ENCODE measurements at regions of chr9 and their contacts with region 1.

Region 1: DNA sequence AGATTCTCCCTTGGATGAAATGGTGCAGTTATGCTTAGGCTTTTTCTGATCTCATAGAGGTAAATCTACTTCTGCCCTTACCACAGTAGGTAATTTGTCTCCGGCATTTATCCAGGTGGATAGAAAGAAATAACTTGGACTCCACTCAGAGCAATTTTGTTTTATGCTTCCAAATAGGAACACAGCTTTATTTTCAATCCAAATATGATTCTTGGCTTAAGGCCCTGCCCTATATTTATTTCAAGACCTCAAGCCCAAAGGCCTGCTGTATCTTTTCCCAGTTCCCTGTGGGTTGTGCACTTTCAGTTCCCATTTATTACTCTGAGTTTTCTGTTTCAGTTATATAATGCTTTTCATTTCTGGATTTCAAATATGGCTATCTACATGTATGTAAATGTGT is 274.2 kb upstream of the SMC2 start:
- DNase-seq: no peak
- ATAC-seq: no peak
- H3K4me3 ChIP-seq: no peak overlapping the region
- H3K27ac ChIP-seq: no peak overlapping the region
- H3K4me1 ChIP-seq: no peaks in the 10 kb centered on the region
- H3K27me3 ChIP-seq: no peaks in the 10 kb centered on the region
- CTCF ChIP-seq: no peak
- POLR2A ChIP-seq: no peak

Region 2: GRCh38 chr9:104121022-104121421 is 301.1 kb after region 1 on chr9:
- intact Hi-C with region 1: loop called in 1 of 2 experiments (anchors 10 kb)
- DNase-seq: no peak
- ATAC-seq: no peak
- H3K4me3 ChIP-seq: no peak overlapping the region
- H3K27ac ChIP-seq: no peak overlapping the region
- H3K4me1 ChIP-seq: no peaks in the 10 kb centered on the region
- H3K27me3 ChIP-seq: no peaks in the 10 kb centered on the region
- CTCF ChIP-seq: no peak
- POLR2A ChIP-seq: no peak

Measured in right lobe of liver (tissue), 6 donors.